ENCODE measurements at regions of chr19 and their contacts with region 1.

Region 1: GRCh38 chr19:34639491-34640085 is 37.4 kb downstream of the SCGB2B2 start:
- DNase-seq: peak; percentile 57
- ATAC-seq: peak; percentile 42
- H3K4me3 Mint-ChIP-seq: no peak overlapping the region
- H3K27ac Mint-ChIP-seq: no peak overlapping the region
- H3K4me1 Mint-ChIP-seq: no peaks in the 10 kb centered on the region
- H3K27me3 Mint-ChIP-seq: no peaks in the 10 kb centered on the region

Region 2: GRCh38 chr19:34712395-34713261 is 73.0 kb after region 1 on chr19:
- CTCF ChIA-PET with region 1: interaction called, 37 read pairs
- DNase-seq: peak; percentile 66
- ATAC-seq: peak; percentile 53
- H3K4me3 Mint-ChIP-seq: no peak overlapping the region
- H3K27ac Mint-ChIP-seq: no peak overlapping the region
- H3K4me1 Mint-ChIP-seq: peaks cover 1% of the 10 kb centered on the region
- H3K27me3 Mint-ChIP-seq: peaks cover 9% of the 10 kb centered on the region